ENCODE measurements at regions of chr6 and their contacts with region 1.

Region 1: GRCh38 chr6:26607434-26608230 is 10.9 kb downstream of the ABT1 start:
- DNase-seq: peak; percentile 63
- H3K4me3 ChIP-seq: no peak overlapping the region
- H3K27ac ChIP-seq: no peak overlapping the region
- H3K4me1 ChIP-seq: no peaks in the 10 kb centered on the region
- H3K27me3 ChIP-seq: no peaks in the 10 kb centered on the region
- CTCF ChIP-seq: peak; percentile 65

Region 2: DNA sequence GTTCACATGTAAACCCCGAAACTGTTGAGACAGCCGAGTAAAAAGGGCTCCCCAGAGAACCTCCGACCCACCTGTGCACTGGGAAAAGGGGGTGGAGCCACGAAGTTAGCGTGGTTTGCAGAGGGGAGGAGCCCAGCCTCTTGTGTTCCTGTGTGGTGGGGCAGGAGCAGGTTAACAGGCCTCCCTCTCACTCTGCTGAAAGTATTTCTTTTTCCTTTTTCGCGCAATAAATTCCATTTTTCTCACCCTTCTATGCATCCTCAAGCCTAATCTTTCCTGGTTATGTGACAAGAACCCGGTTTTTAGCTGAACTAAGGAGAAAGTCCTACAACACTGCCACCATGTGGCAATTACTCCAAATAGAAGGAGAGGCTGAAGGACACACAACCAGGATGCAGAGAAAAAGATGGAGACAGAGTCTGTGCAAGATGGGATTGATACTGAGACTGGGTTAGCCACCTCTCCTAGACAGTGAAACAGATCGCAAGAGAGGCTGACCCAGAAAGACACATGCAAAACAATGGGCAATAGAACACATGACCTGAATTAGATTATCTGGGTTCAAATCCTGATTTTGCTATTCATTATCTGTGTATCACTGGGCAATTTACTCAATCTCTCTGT is 471.2 kb after region 1 on chr6:
- intact Hi-C with region 1: loop called (anchors 2 kb)
- DNase-seq: peak; percentile 57
- H3K4me3 ChIP-seq: peak overlapping the region; percentile 22
- H3K27ac ChIP-seq: no peak overlapping the region
- H3K4me1 ChIP-seq: no peaks in the 10 kb centered on the region
- H3K27me3 ChIP-seq: no peaks in the 10 kb centered on the region
- CTCF ChIP-seq: peak; percentile 68

Measured in colonic mucosa (tissue), 4 donors.